Tibial artery (tissue), 4 donors: ENCODE measurements at regions of chrX and their contacts with region 1.

Region 1: DNA sequence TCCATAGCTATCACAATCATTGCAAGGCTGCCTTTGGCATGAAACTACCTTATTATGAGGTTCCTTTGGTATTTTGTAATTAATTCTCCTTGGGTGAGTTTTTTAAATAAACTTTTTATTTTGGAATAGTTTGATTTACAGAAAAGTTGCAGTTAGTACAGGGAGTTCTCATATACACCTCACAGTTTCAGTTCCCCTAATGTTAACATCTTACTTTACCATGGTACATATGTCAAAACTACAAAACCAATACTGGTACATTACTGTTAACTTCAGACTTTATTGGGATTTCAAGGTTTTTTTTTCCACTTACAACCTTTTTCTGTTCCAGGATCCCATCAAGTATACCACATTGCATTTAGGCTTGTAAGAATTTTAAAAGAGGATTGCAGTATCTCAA is 52.0 kb upstream of the RGN start:
- DNase-seq: no peak
- H3K4me3 ChIP-seq: no peak overlapping the region
- H3K27ac ChIP-seq: no peak overlapping the region
- H3K4me1 ChIP-seq: no peaks in the 10 kb centered on the region
- H3K27me3 ChIP-seq: no peaks in the 10 kb centered on the region
- CTCF ChIP-seq: no peak

Region 2: GRCh38 chrX:46758906-46759644 is 267.1 kb before region 1 on chrX and contains the start of gene SLC9A7:
- intact Hi-C with region 1: loop called (anchors 5 kb)
- DNase-seq: peak; percentile 66 to 80
- H3K4me3 ChIP-seq: peak within 1 kb of the TSS; percentile 51 to 60
- H3K27ac ChIP-seq: peak within 1 kb of the TSS; percentile 22
- H3K4me1 ChIP-seq: peaks cover 0 to 8% (median 3%) of the 10 kb centered on the region in 4 donors
- H3K27me3 ChIP-seq: no peaks in the 10 kb centered on the region
- CTCF ChIP-seq: peak; percentile 80 to 83

Region 3: GRCh38 chrX:46903458-46904242 is 122.5 kb before region 1 on chrX:
- intact Hi-C with region 1: loop called (anchors 10 kb)
- DNase-seq: peak; percentile 64 to 84
- H3K4me3 ChIP-seq: peak overlapping the region; percentile 42 to 53
- H3K27ac ChIP-seq: no peak overlapping the region
- H3K4me1 ChIP-seq: peaks cover 0 to 3% (median 0%) of the 10 kb centered on the region in 4 donors
- H3K27me3 ChIP-seq: no peaks in the 10 kb centered on the region
- CTCF ChIP-seq: peak; percentile 50 to 58